ENCODE measurements at regions of chr13 and their contacts with region 1.

Region 1: DNA sequence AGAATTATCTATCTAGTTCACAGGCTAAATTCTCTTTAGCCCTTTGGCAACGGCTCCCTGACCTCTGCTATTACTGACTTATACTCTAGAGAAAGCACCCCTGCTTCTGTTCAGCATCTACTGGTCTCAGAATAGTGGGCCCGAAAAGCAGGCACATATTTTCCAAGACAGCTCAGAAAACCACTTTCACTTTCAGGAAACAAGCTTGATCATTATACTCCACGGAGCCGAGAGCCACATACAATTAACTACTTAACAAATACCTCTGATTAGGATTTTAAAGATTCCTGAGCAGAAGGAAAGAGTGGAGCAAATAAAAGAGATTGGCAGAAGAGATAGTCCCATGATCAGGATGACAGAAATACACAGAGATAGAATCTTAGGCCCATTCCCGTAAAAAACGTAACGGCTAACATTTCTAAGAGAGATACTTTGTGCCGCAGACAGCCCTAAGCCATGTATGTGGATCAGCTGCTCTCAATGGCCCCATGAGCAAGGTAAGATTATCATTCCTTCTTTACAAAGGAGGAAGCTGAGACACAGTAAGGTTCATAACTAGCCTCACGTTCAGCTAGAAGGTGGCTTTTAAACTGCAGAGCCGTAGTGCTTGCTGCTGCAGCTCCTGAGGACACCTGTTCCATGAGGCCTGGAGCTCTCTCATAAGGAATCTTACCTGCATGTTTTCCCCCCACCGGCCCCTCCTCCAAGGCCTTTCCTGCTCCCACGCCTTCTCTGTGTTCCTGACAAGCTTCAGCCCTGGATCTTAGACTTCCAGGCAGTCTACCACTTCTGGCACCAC is 227.2 kb downstream of the FOXO1 start:
- DNase-seq: peak; percentile 53
- ATAC-seq: peak; percentile 84
- H3K4me3 Mint-ChIP-seq: peak overlapping the region; percentile 54
- H3K27ac Mint-ChIP-seq: peak overlapping the region; percentile 88
- H3K4me1 Mint-ChIP-seq: peaks cover 38% of the 10 kb centered on the region
- H3K27me3 Mint-ChIP-seq: no peaks in the 10 kb centered on the region

Region 2: DNA sequence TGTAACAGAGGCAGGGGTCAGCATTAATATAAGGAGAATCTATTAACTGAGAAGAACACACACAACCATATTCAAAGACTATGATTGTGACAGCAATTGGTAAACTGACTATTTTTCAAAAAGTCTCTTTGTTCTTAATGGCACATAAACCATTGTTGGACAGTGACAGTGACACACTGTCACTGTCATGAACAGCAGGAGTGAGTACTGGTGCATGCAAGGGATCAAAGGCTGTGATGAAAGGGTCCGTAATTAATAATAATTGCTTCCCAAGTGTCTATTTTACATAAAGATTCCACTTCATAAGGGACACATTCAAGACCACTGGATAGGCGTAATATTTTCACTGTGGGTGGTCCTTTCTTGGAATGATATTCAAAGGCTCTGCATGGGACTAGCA is 887.0 kb before region 1 on chr13:
- CTCF ChIA-PET with region 1: no interaction called
- POLR2A ChIA-PET with region 1: no interaction called
- intact Hi-C with region 1: no loop called
- DNase-seq: no peak
- ATAC-seq: no peak
- H3K4me3 Mint-ChIP-seq: no peak overlapping the region
- H3K27ac Mint-ChIP-seq: no peak overlapping the region
- H3K4me1 Mint-ChIP-seq: no peaks in the 10 kb centered on the region
- H3K27me3 Mint-ChIP-seq: peaks cover 14% of the 10 kb centered on the region

Region 3: GRCh38 chr13:40422588-40423235 is 16.5 kb before region 1 on chr13:
- CTCF ChIA-PET with region 1: interaction called, 3 read pairs
- POLR2A ChIA-PET with region 1: interaction called, 10 read pairs
- intact Hi-C with region 1: no loop called
- DNase-seq: peak; percentile 41
- ATAC-seq: peak; percentile 75
- H3K4me3 Mint-ChIP-seq: no peak overlapping the region
- H3K27ac Mint-ChIP-seq: no peak overlapping the region
- H3K4me1 Mint-ChIP-seq: peaks cover 32% of the 10 kb centered on the region
- H3K27me3 Mint-ChIP-seq: no peaks in the 10 kb centered on the region

Region 4: DNA sequence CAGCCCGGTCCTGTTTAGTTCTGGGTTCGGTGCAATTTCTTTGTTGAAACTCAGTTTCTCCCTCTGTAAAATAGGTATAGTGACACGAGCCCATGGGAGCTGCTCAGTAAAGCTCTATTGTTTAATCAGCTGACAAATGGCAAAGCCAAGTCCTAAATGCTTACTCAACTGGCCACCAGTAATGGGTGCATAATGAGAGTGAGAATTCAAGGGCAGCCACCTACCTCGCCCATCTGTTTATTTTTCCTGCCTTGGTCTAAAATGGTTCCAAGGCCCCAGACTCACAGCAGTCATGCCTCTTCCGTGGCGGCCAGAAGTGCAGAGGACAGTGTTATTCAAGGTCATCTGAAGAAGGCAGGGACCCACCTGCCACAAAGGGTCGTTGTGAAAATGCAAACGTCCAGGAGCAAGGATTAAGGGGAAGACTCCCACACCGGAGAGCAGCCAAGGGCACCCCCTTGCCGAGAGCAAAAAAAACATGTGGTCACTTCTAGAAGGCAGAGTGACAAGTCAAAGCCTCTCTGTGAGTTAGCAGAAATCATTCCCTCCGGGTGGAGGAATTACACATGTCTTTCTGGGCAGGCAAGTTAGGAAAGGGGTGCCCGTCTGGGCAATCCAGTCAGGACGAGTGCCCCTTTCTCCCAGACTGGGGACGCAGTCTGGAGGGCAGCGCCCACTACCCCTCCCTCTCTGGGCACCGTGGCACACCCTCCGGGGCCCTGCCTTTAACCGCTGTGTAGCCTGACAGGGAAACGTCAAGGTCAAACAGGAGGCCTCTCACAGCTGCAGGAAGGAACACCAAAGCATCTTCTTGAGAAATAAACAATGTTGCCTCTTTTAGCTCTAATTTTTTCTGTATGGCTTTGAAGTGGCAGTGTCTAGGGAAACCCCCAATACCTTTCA is 41.1 kb after region 1 on chr13:
- CTCF ChIA-PET with region 1: no interaction called
- POLR2A ChIA-PET with region 1: no interaction called
- intact Hi-C with region 1: loop called (anchors 2 to 5 kb)
- DNase-seq: no peak
- ATAC-seq: no peak
- H3K4me3 Mint-ChIP-seq: no peak overlapping the region
- H3K27ac Mint-ChIP-seq: peak overlapping the region; percentile 53
- H3K4me1 Mint-ChIP-seq: peaks cover 54% of the 10 kb centered on the region
- H3K27me3 Mint-ChIP-seq: no peaks in the 10 kb centered on the region

Region 5: GRCh38 chr13:40485611-40486517 is 46.7 kb after region 1 on chr13:
- CTCF ChIA-PET with region 1: no interaction called
- POLR2A ChIA-PET with region 1: interaction called, 5 read pairs
- intact Hi-C with region 1: loop called (anchors 2 to 5 kb)
- DNase-seq: peak; percentile 80
- ATAC-seq: peak; percentile 94
- H3K4me3 Mint-ChIP-seq: peak overlapping the region; percentile 20
- H3K27ac Mint-ChIP-seq: peak overlapping the region; percentile 93
- H3K4me1 Mint-ChIP-seq: peaks cover 86% of the 10 kb centered on the region
- H3K27me3 Mint-ChIP-seq: no peaks in the 10 kb centered on the region

Region 6: DNA sequence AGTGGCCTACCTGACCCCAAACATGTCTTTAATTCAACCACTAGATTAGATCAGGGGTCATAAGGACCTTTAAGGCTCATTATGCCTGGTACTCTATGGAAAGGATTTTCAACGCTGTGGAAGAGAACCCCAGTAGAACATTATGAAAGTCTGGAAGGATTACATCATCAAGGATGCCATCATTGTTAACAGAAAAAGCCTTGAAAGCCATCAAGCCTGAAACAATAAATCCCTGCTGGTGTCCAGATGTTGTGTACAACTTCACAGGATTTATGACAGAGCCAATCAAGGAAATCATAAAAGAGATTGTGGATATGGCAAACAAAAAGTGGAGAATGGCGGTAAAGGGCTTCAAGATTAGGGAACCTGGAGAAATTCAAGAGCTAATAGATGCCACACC is 931.5 kb after region 1 on chr13:
- CTCF ChIA-PET with region 1: no interaction called
- POLR2A ChIA-PET with region 1: no interaction called
- intact Hi-C with region 1: no loop called
- DNase-seq: no peak
- ATAC-seq: no peak
- H3K4me3 Mint-ChIP-seq: no peak overlapping the region
- H3K27ac Mint-ChIP-seq: no peak overlapping the region
- H3K4me1 Mint-ChIP-seq: peaks cover 3% of the 10 kb centered on the region
- H3K27me3 Mint-ChIP-seq: no peaks in the 10 kb centered on the region

Measured in activated CD4-positive, alpha-beta T cell treated with anti-CD3 and anti-CD28 coated beads for 36 hours (primary cell).